ENCODE measurements at regions of chr17 and their contacts with region 1.

Region 1: GRCh38 chr17:10697092-10698081 is at the starts of genes ADPRM and SCO1:
- DNase-seq: peak; percentile 71 to 94 (median 90)
- ATAC-seq: peak; percentile 89
- H3K4me3 ChIP-seq: peak within 1 kb of the TSS; percentile 93 to 95
- H3K4me3 Mint-ChIP-seq: peak within 1 kb of the TSS; percentile 96
- H3K27ac ChIP-seq: peak within 1 kb of the TSS; percentile 84 to 87
- H3K27ac Mint-ChIP-seq: peak within 1 kb of the TSS; percentile 94
- H3K4me1 ChIP-seq: peaks cover 42% of the 10 kb centered on the region
- H3K4me1 Mint-ChIP-seq: peaks cover 65% of the 10 kb centered on the region
- H3K27me3 ChIP-seq: no peaks in the 10 kb centered on the region
- H3K27me3 Mint-ChIP-seq: no peaks in the 10 kb centered on the region
- CTCF ChIP-seq: no peak
- total RNA-seq, gene ADPRM: 24.9 to 25.7 TPM
- total RNA-seq, gene SCO1: 14.2 to 17.1 TPM

Region 2: GRCh38 chr17:10713318-10713717 is 15.9 kb after region 1 on chr17:
- CTCF ChIA-PET with region 1: interaction called, 3 read pairs
- POLR2A ChIA-PET with region 1: interaction called, 5 read pairs
- intact Hi-C with region 1: loop called in 1 of 2 experiments (anchors 1 kb)
- DNase-seq: no peak
- ATAC-seq: no peak
- H3K4me3 ChIP-seq: no peak overlapping the region
- H3K4me3 Mint-ChIP-seq: no peak overlapping the region
- H3K27ac ChIP-seq: no peak overlapping the region
- H3K27ac Mint-ChIP-seq: no peak overlapping the region
- H3K4me1 ChIP-seq: no peaks in the 10 kb centered on the region
- H3K4me1 Mint-ChIP-seq: peaks cover 22% of the 10 kb centered on the region
- H3K27me3 ChIP-seq: no peaks in the 10 kb centered on the region
- H3K27me3 Mint-ChIP-seq: no peaks in the 10 kb centered on the region
- CTCF ChIP-seq: no peak

Region 3: GRCh38 chr17:10729334-10730193 is 32.2 kb after region 1 on chr17 and contains the start of gene TMEM220:
- CTCF ChIA-PET with region 1: no interaction called
- POLR2A ChIA-PET with region 1: interaction called, 10 read pairs
- intact Hi-C with region 1: loop called in 1 of 2 experiments (anchors 1 kb)
- DNase-seq: peak in 8 of 9 experiments; percentile 6 to 70 (median 38)
- ATAC-seq: peak; percentile 74
- H3K4me3 ChIP-seq: peak within 1 kb of the TSS; percentile 58 to 73
- H3K4me3 Mint-ChIP-seq: peak within 1 kb of the TSS; percentile 83
- H3K27ac ChIP-seq: peak within 1 kb of the TSS; percentile 34 to 37
- H3K27ac Mint-ChIP-seq: peak within 1 kb of the TSS; percentile 85
- H3K4me1 ChIP-seq: peaks cover 8% of the 10 kb centered on the region
- H3K4me1 Mint-ChIP-seq: peaks cover 20% of the 10 kb centered on the region
- H3K27me3 ChIP-seq: no peaks in the 10 kb centered on the region
- H3K27me3 Mint-ChIP-seq: peaks cover 5% of the 10 kb centered on the region
- CTCF ChIP-seq: no peak
- total RNA-seq, gene TMEM220: 3.5 TPM